ENCODE measurements at regions of chr2 and their contacts with region 1.

Region 1: DNA sequence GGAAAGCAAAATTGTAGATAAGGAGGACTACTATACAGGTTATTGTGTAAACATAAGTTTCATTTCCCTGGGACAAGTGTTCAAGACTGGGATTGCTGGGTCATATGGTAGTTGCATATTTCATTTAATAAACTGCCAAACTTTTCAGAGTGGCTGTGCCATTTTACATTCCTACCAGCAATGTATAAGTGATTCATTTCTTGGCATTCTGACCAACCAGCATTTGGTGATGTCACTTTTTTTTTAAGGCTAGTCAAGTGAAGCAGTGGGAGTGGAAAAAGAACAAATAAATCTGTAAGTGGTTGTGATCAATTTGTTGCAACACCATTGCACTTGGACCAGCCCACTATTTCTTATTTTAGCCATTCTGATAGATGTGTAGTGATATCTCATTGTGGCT is 5.2 kb upstream of the CHCHD5 start:
- DNase-seq: no peak

Region 2: GRCh38 chr2:112481050-112481527 is 98.2 kb before region 1 on chr2:
- intact Hi-C with region 1: loop called in 1 of 2 experiments (anchors 10 kb)
- DNase-seq: peak; percentile 92

Region 3: GRCh38 chr2:112821142-112821541 is 241.9 kb after region 1 on chr2:
- intact Hi-C with region 1: no loop called
- DNase-seq: no peak

Region 4: DNA sequence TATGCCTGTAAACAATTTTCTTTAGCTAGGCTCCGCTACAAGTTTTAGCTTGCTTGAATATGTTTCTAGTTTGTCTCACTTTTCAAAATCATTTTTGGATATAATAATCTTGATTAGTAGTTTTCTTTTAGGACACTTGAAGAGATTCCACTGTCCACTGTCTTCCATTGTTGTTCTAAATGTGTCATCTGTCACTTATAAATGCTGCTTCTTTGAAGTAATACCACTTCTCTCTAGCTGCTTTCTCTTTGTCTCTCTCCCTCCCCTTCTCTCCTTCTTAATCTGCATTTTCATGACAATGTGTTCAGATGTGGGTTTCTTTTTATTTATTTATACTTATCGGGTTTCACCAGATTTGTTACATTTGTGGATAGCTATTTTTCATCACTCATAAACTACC is 1789.5 kb after region 1 on chr2:
- intact Hi-C with region 1: no loop called
- DNase-seq: no peak